Mammary epithelial cell (primary cell): ENCODE measurements at regions of chr16 and their contacts with region 1.

Region 1: GRCh38 chr16:71734511-71734910 is 10.0 kb upstream of the PHLPP2 start:
- DNase-seq: no peak
- H3K4me3 ChIP-seq: no peak overlapping the region
- H3K27ac ChIP-seq: no peak overlapping the region
- H3K4me1 ChIP-seq: no peaks in the 10 kb centered on the region
- H3K27me3 ChIP-seq: no peaks in the 10 kb centered on the region
- CTCF ChIP-seq: no peak

Region 2: GRCh38 chr16:71693164-71693563 is 41.3 kb before region 1 on chr16:
- CTCF ChIA-PET with region 1: no interaction called
- dilution Hi-C with region 1: loop called (anchors 5 kb)
- in situ Hi-C with region 1: no loop called
- intact Hi-C with region 1: no loop called
- DNase-seq: no peak
- H3K4me3 ChIP-seq: no peak overlapping the region
- H3K27ac ChIP-seq: no peak overlapping the region
- H3K4me1 ChIP-seq: no peaks in the 10 kb centered on the region
- H3K27me3 ChIP-seq: no peaks in the 10 kb centered on the region
- CTCF ChIP-seq: no peak

Region 3: GRCh38 chr16:71788578-71788977 is 54.1 kb after region 1 on chr16:
- CTCF ChIA-PET with region 1: no interaction called
- dilution Hi-C with region 1: loop called (anchors 5 kb)
- in situ Hi-C with region 1: no loop called
- intact Hi-C with region 1: no loop called
- DNase-seq: no peak
- H3K4me3 ChIP-seq: no peak overlapping the region
- H3K27ac ChIP-seq: no peak overlapping the region
- H3K4me1 ChIP-seq: no peaks in the 10 kb centered on the region
- H3K27me3 ChIP-seq: no peaks in the 10 kb centered on the region
- CTCF ChIP-seq: no peak

Region 4: DNA sequence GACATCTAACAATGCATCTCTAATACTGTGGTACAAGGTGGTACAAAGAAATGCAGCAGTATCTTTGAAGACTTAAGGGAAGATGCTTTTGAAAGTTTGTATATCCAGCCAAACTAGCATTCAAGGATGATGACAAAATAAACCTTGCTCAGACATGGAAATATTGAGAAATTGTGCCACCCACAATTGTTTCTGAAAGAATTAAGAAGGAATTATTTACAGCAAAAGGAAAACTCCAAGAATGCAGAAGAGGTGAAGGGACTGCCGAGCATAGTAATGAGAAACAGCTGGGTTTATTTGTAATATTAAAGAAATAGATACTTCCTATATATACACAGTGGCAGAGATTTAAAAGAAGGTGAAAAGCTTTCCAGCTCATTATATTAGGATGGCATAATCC is 408.0 kb after region 1 on chr16:
- CTCF ChIA-PET with region 1: no interaction called
- dilution Hi-C with region 1: no loop called
- in situ Hi-C with region 1: no loop called
- intact Hi-C with region 1: no loop called
- DNase-seq: no peak
- H3K4me3 ChIP-seq: no peak overlapping the region
- H3K27ac ChIP-seq: no peak overlapping the region
- H3K4me1 ChIP-seq: no peaks in the 10 kb centered on the region
- H3K27me3 ChIP-seq: no peaks in the 10 kb centered on the region
- CTCF ChIP-seq: no peak